Sciatic nerve (tissue), 2 donors: ENCODE measurements at regions of chr19 and their contacts with region 1.

Region 1: DNA sequence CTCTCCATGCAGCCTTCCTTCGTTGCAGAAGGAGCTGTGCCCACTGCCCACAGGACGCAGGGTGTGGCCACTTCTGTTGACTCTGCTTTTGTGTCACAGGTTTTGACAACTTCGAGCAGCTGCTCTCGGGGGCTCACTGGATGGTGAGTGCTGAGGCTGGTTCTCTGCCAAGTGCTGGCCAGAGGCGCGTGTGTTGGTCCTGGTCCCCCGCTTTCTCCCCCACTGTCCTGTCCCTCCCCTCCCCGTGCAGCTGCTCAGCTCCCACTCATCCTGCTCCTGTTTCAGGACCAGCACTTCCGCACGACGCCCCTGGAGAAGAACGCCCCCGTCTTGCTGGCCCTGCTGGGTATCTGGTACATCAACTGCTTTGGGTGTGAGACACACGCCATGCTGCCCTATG is 10.6 kb upstream of the PDCD2L start:
- DNase-seq: no peak
- ATAC-seq: no peak

Region 2: DNA sequence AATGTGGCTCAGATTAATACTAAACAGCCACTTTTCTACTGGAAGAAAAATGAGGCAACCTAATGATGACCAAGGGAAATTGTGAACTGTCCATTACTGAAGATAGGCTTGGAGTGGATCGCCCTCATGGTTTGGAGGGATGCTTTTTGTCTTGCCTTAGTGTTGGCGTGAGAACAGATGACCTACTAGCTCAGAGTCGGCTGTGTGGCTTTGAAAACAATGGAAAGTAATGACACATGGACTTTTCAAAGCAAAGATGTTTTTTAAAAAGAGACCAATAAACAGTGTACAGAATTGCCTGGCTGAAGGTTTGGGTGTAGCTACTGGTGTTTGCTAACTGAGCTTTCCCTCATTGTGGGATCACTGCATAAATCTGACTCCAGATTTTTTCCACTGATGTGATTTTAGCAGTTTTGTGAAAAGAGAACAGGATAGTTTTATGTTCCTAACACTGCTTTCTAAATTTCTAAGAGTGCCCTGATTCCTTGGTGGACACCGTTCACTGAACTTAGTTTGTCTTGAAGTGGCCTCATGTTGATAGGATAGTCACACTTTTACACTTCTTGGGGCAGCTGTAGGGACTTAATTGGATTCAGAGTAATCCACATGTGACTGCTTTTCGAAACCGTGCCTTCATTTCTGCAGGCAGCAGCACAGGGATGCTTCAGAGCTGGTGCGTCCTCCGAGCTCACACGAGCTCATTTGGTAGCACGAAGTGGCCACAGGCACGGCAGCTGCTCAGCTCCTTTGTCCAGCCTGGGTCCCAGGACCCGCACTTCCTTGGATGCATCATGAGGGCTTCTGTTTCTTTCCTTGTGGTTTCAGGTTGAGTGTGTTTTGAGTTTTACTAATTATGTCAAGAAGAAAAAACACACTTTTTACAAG is 1015.8 kb before region 1 on chr19:
- intact Hi-C with region 1: loop called (anchors 2 kb)
- DNase-seq: no peak
- ATAC-seq: no peak

Region 3: DNA sequence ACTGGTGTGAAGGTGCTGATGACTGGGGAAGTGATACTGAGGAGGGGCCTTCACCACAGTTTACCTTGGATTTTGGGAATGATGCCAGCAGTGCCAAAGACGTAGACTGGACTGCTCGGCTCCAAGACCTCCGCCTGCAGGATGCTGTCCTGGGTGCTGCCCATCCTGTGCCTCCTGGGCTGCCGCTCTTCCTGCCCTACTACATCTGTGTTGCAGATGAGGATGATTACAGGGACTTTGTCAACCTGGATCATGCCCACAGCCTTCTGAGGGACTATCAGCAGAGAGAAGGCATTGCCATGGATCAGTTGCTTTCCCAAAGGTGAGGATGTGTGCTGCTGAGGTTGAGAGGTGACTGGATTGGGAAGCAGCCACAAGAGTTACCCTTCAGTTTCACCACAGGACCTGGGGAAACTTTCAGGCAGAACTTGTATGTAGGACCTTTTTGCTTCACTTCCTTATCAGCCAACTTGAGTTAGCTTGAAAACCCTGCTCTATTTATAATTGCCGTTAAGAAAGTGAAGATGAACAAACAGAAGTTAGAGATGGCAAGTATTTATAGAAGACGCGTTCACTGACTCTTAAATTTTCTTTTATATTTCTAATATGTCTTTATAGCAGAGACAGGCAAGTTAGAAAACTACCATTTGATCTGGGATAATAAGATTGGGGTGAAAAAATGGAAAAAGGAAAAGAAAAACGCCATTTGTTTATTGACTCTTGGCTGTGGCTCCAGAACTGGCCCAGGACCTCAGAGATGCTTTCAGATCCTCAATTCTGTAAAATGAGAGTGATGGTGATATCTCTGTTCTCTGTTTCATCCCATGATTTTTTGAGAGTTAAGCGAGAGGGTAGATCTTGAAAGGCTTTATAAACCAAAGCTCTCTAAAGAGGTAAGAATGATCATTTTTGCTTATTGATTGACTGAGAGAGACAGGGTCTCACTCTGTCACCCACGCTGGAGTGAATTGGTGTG is 15.8 kb after region 1 on chr19:
- intact Hi-C with region 1: loop called (anchors 1 kb)
- DNase-seq: peak; percentile 4
- ATAC-seq: no peak

Region 4: DNA sequence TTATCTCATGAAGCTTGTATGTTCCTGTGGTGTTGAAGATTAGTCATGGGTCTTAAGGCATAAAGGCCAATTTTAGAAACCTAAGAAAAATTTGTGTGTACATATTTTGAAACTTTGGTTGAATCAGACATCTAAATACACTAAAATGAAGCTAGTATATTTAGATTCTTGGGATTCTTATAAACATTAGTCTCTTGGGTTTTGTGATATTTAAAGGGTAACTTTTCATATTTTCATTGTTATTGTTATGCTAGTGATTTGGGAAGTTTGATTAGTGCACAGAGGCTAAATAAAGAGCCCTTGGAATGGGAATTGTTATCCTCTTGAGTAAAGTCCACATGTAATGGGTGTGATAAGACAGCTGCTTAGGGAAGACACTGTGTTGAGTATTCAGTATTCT is 59.1 kb after region 1 on chr19:
- intact Hi-C with region 1: no loop called
- DNase-seq: no peak
- ATAC-seq: no peak